H1 (cell line): ENCODE measurements at regions of chr5 and their contacts with region 1.

Region 1: GRCh38 chr5:956941-957747 is 51.5 kb upstream of the NKD2 start:
- DNase-seq: peak in 1 of 2 experiments; percentile 69
- H3K4me3 ChIP-seq: no peak overlapping the region
- H3K27ac ChIP-seq: no peak overlapping the region
- H3K4me1 ChIP-seq: no peaks in the 10 kb centered on the region
- H3K27me3 ChIP-seq: no peaks in the 10 kb centered on the region
- CTCF ChIP-seq: peak in 2 of 3 experiments; percentile 22 to 34; a peak in 3 of 4 replicates
- EP300 ChIP-seq: no peak
- POLR2A ChIP-seq: no peak
- RAD21 ChIP-seq: 0 out of 4 replicates have a peak, but pooled peaks of 1 of the 2 experiments have one; percentile 5

Region 2: GRCh38 chr5:945691-946551 is 11.2 kb before region 1 on chr5:
- CTCF ChIA-PET with region 1: interaction called, 13 read pairs
- POLR2A ChIA-PET with region 1: interaction called, 4 read pairs
- DNase-seq: peak in 1 of 2 experiments; percentile 42
- H3K4me3 ChIP-seq: no peak overlapping the region
- H3K27ac ChIP-seq: no peak overlapping the region
- H3K4me1 ChIP-seq: peaks cover 0 to 4% (median 0%) of the 10 kb centered on the region in 4 experiments; a peak in 2 of 7 replicates
- H3K27me3 ChIP-seq: peaks cover 0 to 6% (median 4%) of the 10 kb centered on the region in 4 experiments; a peak in 4 of 7 replicates
- CTCF ChIP-seq: no peak
- EP300 ChIP-seq: no peak
- POLR2A ChIP-seq: no peak
- RAD21 ChIP-seq: no peak